ENCODE measurements at regions of chr2 and their contacts with region 1.

Region 1: DNA sequence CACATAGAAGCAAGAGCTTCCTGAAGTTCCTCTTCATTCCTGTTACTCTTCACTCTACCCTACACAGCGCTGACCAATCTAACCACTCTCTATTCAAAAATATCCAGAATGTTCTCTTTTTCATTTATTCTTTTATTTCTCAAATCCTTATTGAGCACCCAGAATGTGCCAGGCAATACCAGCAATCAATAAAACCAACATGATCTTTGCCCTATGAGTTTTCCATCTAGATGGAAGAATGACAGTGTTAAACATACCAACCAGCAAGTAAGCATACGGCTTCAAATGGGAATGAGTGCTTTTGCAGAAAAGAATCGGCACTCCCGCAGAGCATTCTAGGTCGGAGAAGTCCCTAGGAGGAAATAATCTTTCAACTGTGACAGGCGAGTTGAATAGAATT is 217.9 kb upstream of the MEIS1 start:
- DNase-seq: no peak
- ATAC-seq: no peak
- H3K4me3 ChIP-seq: no peak overlapping the region
- H3K27ac ChIP-seq: no peak overlapping the region
- H3K4me1 ChIP-seq: no peaks in the 10 kb centered on the region
- H3K27me3 ChIP-seq: no peaks in the 10 kb centered on the region
- CTCF ChIP-seq: no peak
- POLR2A ChIP-seq: no peak

Region 2: GRCh38 chr2:66268756-66269155 is 51.7 kb after region 1 on chr2:
- in situ Hi-C with region 1: no loop called
- intact Hi-C with region 1: loop called (anchors 2 kb)
- DNase-seq: no peak
- ATAC-seq: no peak
- H3K4me3 ChIP-seq: no peak overlapping the region
- H3K27ac ChIP-seq: no peak overlapping the region
- H3K4me1 ChIP-seq: no peaks in the 10 kb centered on the region
- H3K27me3 ChIP-seq: no peaks in the 10 kb centered on the region
- CTCF ChIP-seq: no peak
- POLR2A ChIP-seq: no peak